ENCODE measurements at regions of chr2 and their contacts with region 1.

Region 1: DNA sequence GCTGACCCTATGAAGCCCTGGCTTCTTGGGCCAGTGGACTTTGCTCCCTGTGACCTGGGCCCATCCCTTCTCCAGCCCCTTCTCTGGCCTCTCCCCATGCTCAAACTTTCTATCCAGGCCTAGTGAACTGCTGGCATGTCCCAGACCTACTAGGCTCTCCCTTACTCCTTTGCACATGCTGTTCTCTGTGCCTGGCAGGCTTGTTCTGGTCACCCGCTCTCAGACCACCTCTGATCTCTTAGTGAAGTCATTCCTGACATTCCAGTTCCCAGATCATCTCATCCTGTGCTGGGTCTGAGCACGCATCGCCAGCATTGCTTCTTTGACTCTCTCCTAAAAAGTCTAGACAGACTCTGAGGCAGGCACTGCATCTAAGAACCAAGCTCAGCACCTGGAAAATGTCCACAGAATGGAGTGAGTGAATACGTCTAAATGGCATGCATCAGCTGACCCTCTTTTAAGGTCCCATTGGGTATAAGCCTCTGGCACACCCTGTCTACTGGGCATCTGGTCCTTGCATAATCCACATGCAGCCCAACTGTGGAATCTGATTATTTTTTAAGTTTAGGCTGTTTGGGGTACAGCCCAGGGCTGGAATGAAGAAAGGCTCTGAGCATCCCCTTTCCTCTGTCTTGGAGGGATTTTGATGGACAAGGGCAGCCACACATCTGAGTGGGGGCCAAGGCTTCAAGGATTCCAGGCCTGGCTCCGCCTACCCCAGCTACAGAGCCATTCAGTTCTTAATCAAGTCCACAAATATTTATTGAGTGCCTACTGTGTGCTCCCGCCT is 130.6 kb upstream of the HAAO start:
- DNase-seq: peak; percentile 66 to 71
- ATAC-seq: peak; percentile 48
- H3K4me3 ChIP-seq: no peak overlapping the region
- H3K27ac ChIP-seq: peak overlapping the region; percentile 93 to 98
- H3K4me1 ChIP-seq: peaks cover 4 to 5% of the 10 kb centered on the region in 2 donors
- H3K27me3 ChIP-seq: no peaks in the 10 kb centered on the region

Region 2: GRCh38 chr2:42865884-42866881 is 56.8 kb before region 1 on chr2:
- intact Hi-C with region 1: loop called in 1 of 2 experiments (anchors 2 kb)
- DNase-seq: peak in 1 of 2 donors; percentile 80
- ATAC-seq: peak; percentile 86
- H3K4me3 ChIP-seq: no peak overlapping the region
- H3K27ac ChIP-seq: peak overlapping the region; percentile 79 to 92
- H3K4me1 ChIP-seq: peaks cover 0 to 4% of the 10 kb centered on the region in 2 donors
- H3K27me3 ChIP-seq: no peaks in the 10 kb centered on the region

Region 3: DNA sequence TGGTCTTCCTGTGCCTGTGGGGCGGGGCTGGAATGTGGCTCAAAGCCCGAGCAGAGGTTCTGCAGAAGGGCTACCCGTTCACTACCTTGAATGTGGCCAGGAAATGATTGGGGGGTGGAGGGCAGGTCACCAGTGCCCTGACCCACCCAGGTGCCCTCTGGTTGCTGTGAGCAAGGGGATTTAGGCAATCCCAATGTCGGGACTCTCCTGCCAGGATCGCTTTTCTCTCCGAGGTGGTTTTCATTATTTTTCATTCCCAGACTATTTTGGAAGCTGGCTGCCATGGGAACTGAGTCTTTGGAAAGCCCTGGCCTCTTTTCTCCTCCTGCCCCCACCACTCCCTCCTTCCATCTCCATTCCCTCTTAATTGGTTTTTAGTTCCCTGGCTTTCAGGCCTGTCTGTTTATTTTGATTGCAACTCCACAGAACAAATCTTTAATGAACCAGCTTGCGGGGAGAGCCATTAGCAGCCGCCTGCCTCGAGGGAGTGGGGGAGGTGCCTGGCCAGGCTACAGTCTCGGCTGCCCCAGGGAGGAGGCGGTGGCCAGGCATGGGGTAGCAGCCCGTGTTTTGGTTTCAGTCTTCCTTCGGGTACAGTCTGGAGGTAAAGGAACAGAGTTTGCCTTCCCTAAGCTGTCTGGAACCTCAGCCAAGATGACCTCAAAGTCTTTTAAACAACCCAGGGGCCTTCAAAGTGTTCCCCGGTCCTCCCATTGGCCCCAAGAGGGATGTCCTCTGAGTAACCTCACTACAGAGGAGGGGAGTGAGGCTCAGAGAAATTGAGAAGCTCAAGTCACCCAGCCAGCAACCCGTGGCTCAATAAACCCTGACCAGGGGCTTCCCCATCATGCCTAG is 16.2 kb before region 1 on chr2:
- intact Hi-C with region 1: loop called in 1 of 2 experiments (anchors 2 kb)
- DNase-seq: peak; percentile 82 to 87
- ATAC-seq: peak; percentile 90
- H3K4me3 ChIP-seq: no peak overlapping the region
- H3K27ac ChIP-seq: peak overlapping the region; percentile 81 to 86
- H3K4me1 ChIP-seq: peaks cover 0 to 2% of the 10 kb centered on the region in 2 donors
- H3K27me3 ChIP-seq: no peaks in the 10 kb centered on the region

Region 4: DNA sequence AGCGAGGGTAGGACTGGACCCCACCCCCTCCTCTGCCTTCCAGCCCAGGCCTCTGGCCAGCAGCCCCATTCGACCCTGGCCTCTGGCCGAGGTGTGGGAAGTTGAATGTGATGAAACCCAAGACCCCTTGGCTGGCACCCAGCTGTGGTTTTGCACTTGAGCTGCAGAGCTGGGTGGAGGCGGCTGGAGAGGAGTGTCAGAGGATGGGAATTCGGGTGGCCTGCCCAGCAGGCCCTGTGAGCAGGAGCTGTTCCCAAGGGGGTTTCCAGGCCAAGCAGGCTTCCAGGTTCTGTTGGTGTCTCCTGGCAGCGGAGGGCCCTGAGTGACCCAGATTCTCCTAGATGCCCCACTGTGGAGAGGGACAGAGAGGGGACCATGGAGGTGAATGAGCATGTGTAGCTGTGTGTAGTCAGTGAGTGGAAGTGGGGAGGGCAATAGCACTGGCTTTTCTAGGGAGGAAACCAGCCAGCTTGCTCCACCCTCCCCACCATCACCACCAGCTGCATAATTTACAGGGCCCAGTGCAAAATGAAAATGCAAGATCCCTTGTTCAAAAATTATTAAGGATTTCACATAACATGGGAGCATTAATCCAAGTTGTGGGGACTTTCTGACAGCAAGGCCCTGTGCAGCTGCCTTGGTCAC is 41.6 kb after region 1 on chr2:
- intact Hi-C with region 1: no loop called
- DNase-seq: peak; percentile 94 to 95
- ATAC-seq: peak; percentile 5
- H3K4me3 ChIP-seq: no peak overlapping the region
- H3K27ac ChIP-seq: peak overlapping the region in 1 of 2 donors; percentile 46
- H3K4me1 ChIP-seq: no peaks in the 10 kb centered on the region
- H3K27me3 ChIP-seq: no peaks in the 10 kb centered on the region

Region 5: GRCh38 chr2:43105586-43106558 is 182.9 kb after region 1 on chr2:
- intact Hi-C with region 1: no loop called
- DNase-seq: peak in 1 of 2 donors; percentile 82
- ATAC-seq: peak; percentile 36
- H3K4me3 ChIP-seq: no peak overlapping the region
- H3K27ac ChIP-seq: no peak overlapping the region
- H3K4me1 ChIP-seq: no peaks in the 10 kb centered on the region
- H3K27me3 ChIP-seq: no peaks in the 10 kb centered on the region

Region 6: DNA sequence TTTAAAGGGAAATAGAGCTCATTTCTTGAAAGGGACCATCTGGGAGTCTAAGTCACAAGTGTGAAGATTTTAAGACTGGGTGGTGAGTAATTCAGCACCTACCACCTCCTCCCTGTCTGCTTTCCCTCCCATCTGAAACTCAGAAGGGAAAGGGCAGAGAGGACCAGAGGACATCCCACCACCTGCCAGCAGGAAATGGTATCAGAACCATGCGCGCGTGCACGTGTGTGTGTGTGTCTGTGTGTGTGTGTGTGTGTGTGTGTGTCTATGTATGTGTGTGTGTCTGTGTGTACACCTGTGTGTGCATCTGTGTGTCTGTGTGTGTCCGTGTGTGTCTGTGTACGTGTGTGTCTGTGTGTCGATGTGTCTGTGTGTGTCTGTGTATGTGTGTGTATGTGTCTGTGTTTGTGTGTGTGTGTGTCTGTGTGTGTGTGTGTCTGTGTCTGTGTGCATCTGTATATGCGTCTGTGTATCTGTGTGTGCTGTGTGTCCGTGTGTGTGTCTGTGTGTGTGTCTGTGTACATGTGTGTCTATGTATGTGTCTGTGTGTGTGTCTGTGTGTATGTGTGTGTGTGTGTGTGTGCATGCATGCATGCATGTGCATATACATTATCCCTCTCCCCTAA is 226.6 kb after region 1 on chr2:
- intact Hi-C with region 1: no loop called
- DNase-seq: no peak
- ATAC-seq: no peak
- H3K4me3 ChIP-seq: no peak overlapping the region
- H3K27ac ChIP-seq: no peak overlapping the region
- H3K4me1 ChIP-seq: no peaks in the 10 kb centered on the region
- H3K27me3 ChIP-seq: no peaks in the 10 kb centered on the region

Measured in aorta (tissue), 5 donors.